CD8-positive, alpha-beta T cell (primary cell): ENCODE measurements at regions of chr16 and their contacts with region 1.

Region 1: DNA sequence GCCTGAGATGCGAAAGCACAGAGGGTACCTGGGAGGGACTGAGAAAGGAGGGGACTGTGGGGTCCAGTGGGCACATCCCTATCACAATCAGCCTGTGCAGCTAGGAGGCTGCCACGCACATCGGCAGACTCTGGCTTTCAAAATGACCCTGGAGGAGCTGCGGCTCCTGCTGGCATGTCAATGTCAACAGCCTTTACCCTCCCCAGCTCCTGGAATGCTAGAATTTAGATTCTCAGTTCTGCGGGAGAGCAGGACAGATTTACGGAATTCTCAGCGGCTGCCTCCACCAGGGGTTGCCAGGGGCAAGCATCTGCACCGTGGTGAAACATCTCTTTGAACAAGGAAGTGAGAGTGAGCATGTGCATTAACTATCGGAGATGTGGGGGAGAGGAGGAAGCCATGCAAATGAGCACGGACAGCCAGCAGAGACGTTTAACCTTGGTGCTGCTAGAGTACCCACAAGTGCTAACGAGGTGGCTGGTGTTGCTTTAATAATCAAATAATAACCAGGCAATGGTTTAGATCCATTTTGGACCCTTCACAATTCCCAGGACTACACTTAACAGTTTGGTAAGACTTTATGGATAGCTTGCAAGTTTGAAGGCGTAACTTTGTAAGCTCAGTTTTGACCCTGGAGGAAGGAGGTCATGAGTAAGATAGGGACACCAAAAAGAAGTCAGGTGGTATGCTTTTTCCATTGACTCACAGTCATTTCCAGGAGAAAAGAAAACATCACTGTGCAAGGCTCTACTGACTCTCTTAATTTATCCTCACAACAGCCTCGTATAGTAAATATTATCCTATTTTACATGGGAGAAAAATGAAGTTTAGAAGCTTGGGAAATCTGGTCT is 54.1 kb downstream of the XYLT1 start:
- DNase-seq: peak; percentile 21 to 78 (median 55)
- ATAC-seq: peak; percentile 94
- H3K4me3 ChIP-seq: peak overlapping the region; percentile 41 to 49
- H3K4me3 Mint-ChIP-seq: peak overlapping the region; percentile 87
- H3K27ac ChIP-seq: peak overlapping the region; percentile 41 to 60
- H3K27ac Mint-ChIP-seq: peak overlapping the region; percentile 92
- H3K4me1 ChIP-seq: peaks cover 16% of the 10 kb centered on the region
- H3K4me1 Mint-ChIP-seq: peaks cover 42% of the 10 kb centered on the region
- H3K27me3 ChIP-seq: no peaks in the 10 kb centered on the region
- H3K27me3 Mint-ChIP-seq: no peaks in the 10 kb centered on the region
- CTCF ChIP-seq: peak; percentile 43

Region 2: GRCh38 chr16:17194190-17194780 is 222.4 kb before region 1 on chr16:
- CTCF ChIA-PET with region 1: no interaction called
- POLR2A ChIA-PET with region 1: no interaction called
- intact Hi-C with region 1: loop called (anchors 1 to 5 kb)
- DNase-seq: peak; percentile 19 to 78 (median 67)
- ATAC-seq: no peak
- H3K4me3 ChIP-seq: no peak overlapping the region
- H3K4me3 Mint-ChIP-seq: no peak overlapping the region
- H3K27ac ChIP-seq: no peak overlapping the region
- H3K27ac Mint-ChIP-seq: no peak overlapping the region
- H3K4me1 ChIP-seq: no peaks in the 10 kb centered on the region
- H3K4me1 Mint-ChIP-seq: no peaks in the 10 kb centered on the region
- H3K27me3 ChIP-seq: no peaks in the 10 kb centered on the region
- H3K27me3 Mint-ChIP-seq: no peaks in the 10 kb centered on the region
- CTCF ChIP-seq: peak; percentile 61

Region 3: GRCh38 chr16:17211797-17212196 is 204.9 kb before region 1 on chr16:
- CTCF ChIA-PET with region 1: interaction called, 3 read pairs
- POLR2A ChIA-PET with region 1: no interaction called
- intact Hi-C with region 1: loop called in 1 of 2 experiments (anchors 5 kb)
- DNase-seq: peak in 7 of 9 experiments; percentile 4 to 64 (median 41)
- ATAC-seq: peak; percentile 56
- H3K4me3 ChIP-seq: no peak overlapping the region
- H3K4me3 Mint-ChIP-seq: no peak overlapping the region
- H3K27ac ChIP-seq: no peak overlapping the region
- H3K27ac Mint-ChIP-seq: no peak overlapping the region
- H3K4me1 ChIP-seq: peaks cover 22% of the 10 kb centered on the region
- H3K4me1 Mint-ChIP-seq: peaks cover 19% of the 10 kb centered on the region
- H3K27me3 ChIP-seq: no peaks in the 10 kb centered on the region
- H3K27me3 Mint-ChIP-seq: no peaks in the 10 kb centered on the region
- CTCF ChIP-seq: peak; percentile 48

Region 4: DNA sequence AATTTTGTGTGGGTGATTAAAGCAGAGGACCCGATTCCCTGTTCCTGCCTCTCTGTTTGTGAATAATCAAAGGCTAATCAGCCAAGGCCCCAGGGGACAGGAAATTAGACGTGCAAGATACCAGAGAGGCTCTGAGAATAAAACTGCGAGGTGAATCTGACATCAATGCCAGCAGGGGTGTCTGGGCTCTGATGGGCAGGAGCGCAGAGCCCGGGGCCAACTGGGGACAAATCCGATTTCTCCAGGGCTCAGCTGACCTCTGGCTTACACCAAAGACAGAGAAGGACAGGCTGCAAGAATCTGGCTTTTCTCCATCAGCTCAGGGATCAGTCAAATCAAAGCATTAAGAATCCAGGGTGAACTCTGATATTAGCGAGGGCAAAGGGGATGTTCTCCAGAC is 120.3 kb before region 1 on chr16:
- CTCF ChIA-PET with region 1: no interaction called
- POLR2A ChIA-PET with region 1: no interaction called
- intact Hi-C with region 1: no loop called
- DNase-seq: no peak
- ATAC-seq: no peak
- H3K4me3 ChIP-seq: no peak overlapping the region
- H3K4me3 Mint-ChIP-seq: no peak overlapping the region
- H3K27ac ChIP-seq: no peak overlapping the region
- H3K27ac Mint-ChIP-seq: no peak overlapping the region
- H3K4me1 ChIP-seq: no peaks in the 10 kb centered on the region
- H3K4me1 Mint-ChIP-seq: no peaks in the 10 kb centered on the region
- H3K27me3 ChIP-seq: no peaks in the 10 kb centered on the region
- H3K27me3 Mint-ChIP-seq: no peaks in the 10 kb centered on the region
- CTCF ChIP-seq: no peak

Region 5: GRCh38 chr16:17444658-17445057 is 28.0 kb after region 1 on chr16:
- CTCF ChIA-PET with region 1: interaction called, 10 read pairs
- POLR2A ChIA-PET with region 1: interaction called, 3 read pairs
- intact Hi-C with region 1: no loop called
- DNase-seq: no peak
- ATAC-seq: no peak
- H3K4me3 ChIP-seq: no peak overlapping the region
- H3K4me3 Mint-ChIP-seq: no peak overlapping the region
- H3K27ac ChIP-seq: no peak overlapping the region
- H3K27ac Mint-ChIP-seq: no peak overlapping the region
- H3K4me1 ChIP-seq: peaks cover 23% of the 10 kb centered on the region
- H3K4me1 Mint-ChIP-seq: peaks cover 29% of the 10 kb centered on the region
- H3K27me3 ChIP-seq: no peaks in the 10 kb centered on the region
- H3K27me3 Mint-ChIP-seq: no peaks in the 10 kb centered on the region
- CTCF ChIP-seq: no peak

Region 6: GRCh38 chr16:17497648-17498047 is 81.0 kb after region 1 on chr16:
- CTCF ChIA-PET with region 1: no interaction called
- POLR2A ChIA-PET with region 1: no interaction called
- intact Hi-C with region 1: no loop called
- DNase-seq: no peak
- ATAC-seq: no peak
- H3K4me3 ChIP-seq: no peak overlapping the region
- H3K4me3 Mint-ChIP-seq: no peak overlapping the region
- H3K27ac ChIP-seq: no peak overlapping the region
- H3K27ac Mint-ChIP-seq: no peak overlapping the region
- H3K4me1 ChIP-seq: no peaks in the 10 kb centered on the region
- H3K4me1 Mint-ChIP-seq: no peaks in the 10 kb centered on the region
- H3K27me3 ChIP-seq: no peaks in the 10 kb centered on the region
- H3K27me3 Mint-ChIP-seq: no peaks in the 10 kb centered on the region
- CTCF ChIP-seq: no peak